Common myeloid progenitor, CD34-positive (primary cell): ENCODE measurements at regions of chr3 and their contacts with region 1.

Region 1: GRCh38 chr3:45055411-45056143 is 29.5 kb downstream of the CLEC3B start:
- DNase-seq: peak; percentile 45 to 66 (median 65)
- H3K4me3 ChIP-seq: no peak overlapping the region
- H3K27ac ChIP-seq: no peak overlapping the region
- H3K4me1 ChIP-seq: peaks cover 0 to 2% (median 0%) of the 10 kb centered on the region in 4 experiments
- H3K27me3 ChIP-seq: no peaks in the 10 kb centered on the region

Region 2: GRCh38 chr3:45026038-45026437 is 29.5 kb before region 1 on chr3 and contains the start of gene CLEC3B:
- CTCF ChIA-PET with region 1: no interaction called
- POLR2A ChIA-PET with region 1: no interaction called
- DNase-seq: no peak
- H3K4me3 ChIP-seq: peak within 1 kb of the TSS in 2 of 7 experiments; percentile 46 to 61
- H3K27ac ChIP-seq: no peak within 1 kb of the TSS
- H3K4me1 ChIP-seq: peaks cover 0 to 48% (median 19%) of the 10 kb centered on the region in 4 experiments
- H3K27me3 ChIP-seq: no peaks in the 10 kb centered on the region

Region 3: DNA sequence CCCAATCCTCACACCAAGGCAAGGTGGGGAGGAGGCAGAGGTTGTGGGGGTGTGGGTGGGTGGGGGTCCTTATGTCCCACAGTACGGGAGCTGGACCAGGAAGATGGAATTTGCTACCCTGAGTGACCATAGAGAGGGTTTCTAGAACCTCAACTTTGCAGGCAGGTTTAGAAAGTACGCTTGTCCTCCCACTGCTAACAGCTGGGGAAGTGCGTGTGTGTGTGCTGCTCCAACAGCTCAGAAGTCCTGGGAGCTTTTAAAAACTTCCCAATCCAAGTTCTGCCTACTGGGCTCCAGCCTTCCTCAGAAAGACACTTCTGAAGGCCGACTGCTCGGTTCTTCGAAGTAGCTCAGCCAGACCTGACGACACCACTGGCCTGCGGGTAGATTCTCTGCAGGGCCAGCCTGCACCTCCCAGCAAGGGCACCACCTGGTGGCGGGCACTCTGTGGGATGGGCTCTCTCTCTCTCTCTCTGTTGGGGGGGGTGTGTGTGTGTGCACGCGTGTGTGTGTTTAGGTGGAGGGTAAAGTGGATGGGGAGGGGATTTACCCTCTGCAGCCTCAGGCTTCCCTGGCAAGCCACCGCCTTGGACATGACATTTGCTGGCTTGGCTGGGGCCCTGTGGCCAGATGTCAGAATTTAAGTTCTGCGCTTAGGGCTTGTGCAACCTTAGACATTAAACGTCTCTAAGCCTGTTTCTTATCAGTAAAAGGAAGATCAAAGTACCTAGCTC is 154.9 kb after region 1 on chr3:
- CTCF ChIA-PET with region 1: interaction called, 17 read pairs
- POLR2A ChIA-PET with region 1: no interaction called
- DNase-seq: peak; percentile 82 to 90 (median 89)
- H3K4me3 ChIP-seq: no peak overlapping the region
- H3K27ac ChIP-seq: no peak overlapping the region
- H3K4me1 ChIP-seq: peaks cover 0 to 21% (median 17%) of the 10 kb centered on the region in 4 experiments
- H3K27me3 ChIP-seq: no peaks in the 10 kb centered on the region